Calu3 (cell line): ENCODE measurements at regions of chr2 and their contacts with region 1.

Region 1: DNA sequence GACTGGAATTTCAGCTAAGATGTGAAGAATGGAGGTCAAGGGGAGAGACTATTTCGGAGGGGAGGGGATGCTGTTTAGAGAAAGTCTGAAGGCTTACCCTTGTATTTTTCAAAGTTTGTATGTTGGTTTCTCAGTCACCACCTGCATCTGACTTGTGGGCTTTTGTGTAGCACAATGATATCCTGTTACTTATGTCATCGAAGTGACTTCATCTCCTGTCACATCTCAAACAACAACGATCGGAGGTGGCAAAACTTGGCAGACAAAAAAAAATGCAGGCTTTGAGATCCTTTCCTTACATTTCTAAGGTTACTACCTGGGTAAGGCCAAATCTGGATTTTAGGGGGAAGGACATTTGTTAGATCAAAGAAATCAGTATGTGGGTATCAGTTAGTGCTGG is 11.7 kb upstream of the CXCR4 start:
- DNase-seq: no peak
- H3K4me3 Mint-ChIP-seq: peak overlapping the region; percentile 3
- H3K27ac Mint-ChIP-seq: peak overlapping the region; percentile 64
- H3K4me1 Mint-ChIP-seq: peaks cover 30% of the 10 kb centered on the region
- H3K27me3 Mint-ChIP-seq: no peaks in the 10 kb centered on the region
- CTCF ChIP-seq: no peak

Region 2: GRCh38 chr2:136207030-136207623 is 77.5 kb after region 1 on chr2:
- CTCF ChIA-PET with region 1: no interaction called
- intact Hi-C with region 1: loop called (anchors 5 kb)
- DNase-seq: no peak
- H3K4me3 Mint-ChIP-seq: no peak overlapping the region
- H3K27ac Mint-ChIP-seq: no peak overlapping the region
- H3K4me1 Mint-ChIP-seq: peaks cover 21% of the 10 kb centered on the region
- H3K27me3 Mint-ChIP-seq: no peaks in the 10 kb centered on the region
- CTCF ChIP-seq: no peak